AG04449 (cell line): ENCODE measurements at regions of chr12 and their contacts with region 1.

Region 1: GRCh38 chr12:98939350-98939749 is 294.3 kb downstream of the APAF1 start:
- DNase-seq: peak; percentile 19
- H3K4me3 ChIP-seq: no peak overlapping the region
- CTCF ChIP-seq: peak; percentile 38

Region 2: GRCh38 chr12:98725476-98726247 is 213.7 kb before region 1 on chr12:
- CTCF ChIA-PET with region 1: interaction called, 14 read pairs
- POLR2A ChIA-PET with region 1: no interaction called
- DNase-seq: peak; percentile 26
- H3K4me3 ChIP-seq: no peak overlapping the region
- CTCF ChIP-seq: peak; percentile 66

Region 3: GRCh38 chr12:98916106-98916505 is 23.2 kb before region 1 on chr12:
- CTCF ChIA-PET with region 1: no interaction called
- POLR2A ChIA-PET with region 1: no interaction called
- DNase-seq: no peak
- H3K4me3 ChIP-seq: no peak overlapping the region
- CTCF ChIP-seq: no peak

Region 4: GRCh38 chr12:99271071-99271470 is 331.7 kb after region 1 on chr12:
- CTCF ChIA-PET with region 1: no interaction called
- POLR2A ChIA-PET with region 1: no interaction called
- DNase-seq: no peak
- H3K4me3 ChIP-seq: no peak overlapping the region
- CTCF ChIP-seq: no peak